ENCODE measurements at regions of chr7 and their contacts with region 1.

Region 1: DNA sequence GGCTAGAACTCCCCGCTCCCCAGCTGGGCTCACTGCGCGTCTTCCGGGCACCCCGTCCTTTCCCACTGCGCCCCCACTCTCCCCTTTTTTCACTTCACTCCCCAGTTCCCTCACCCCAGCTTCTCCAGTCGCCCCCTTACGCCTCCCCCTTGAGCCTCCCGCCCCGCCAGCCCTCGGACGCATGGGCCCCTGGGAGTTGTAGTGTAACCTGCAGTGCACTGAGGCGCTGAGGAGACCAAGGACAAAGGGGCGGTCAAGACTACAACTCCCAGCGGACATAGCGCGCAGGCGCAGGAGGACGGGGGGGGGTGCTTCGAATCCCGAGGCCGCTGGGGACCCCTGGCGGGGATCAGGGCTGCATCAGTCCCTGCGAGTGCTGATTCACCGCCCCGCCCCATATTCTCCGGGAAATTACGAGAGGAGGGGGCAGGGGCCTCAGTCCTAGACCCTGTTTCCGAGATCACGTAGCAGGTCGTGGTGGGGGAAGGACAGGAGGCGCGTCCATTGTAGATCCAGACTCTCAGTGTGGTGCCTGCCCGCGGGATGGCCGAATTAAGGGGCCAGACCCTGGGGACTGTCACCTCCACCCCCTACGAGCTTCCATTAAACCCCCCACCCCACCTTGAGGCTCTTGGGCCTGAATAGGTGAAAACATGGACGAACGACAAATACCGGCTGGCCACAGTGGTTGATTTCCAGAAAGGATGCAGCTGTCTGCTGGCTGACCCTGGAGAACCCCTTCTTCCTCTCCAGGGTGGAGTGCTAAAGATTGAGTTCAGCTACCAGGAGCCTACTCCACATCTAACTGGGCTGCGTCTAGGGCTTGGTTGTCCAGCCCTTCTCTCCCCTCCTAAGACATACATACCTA is 554 bp upstream of the YWHAG start:
- DNase-seq: peak; percentile 99
- H3K4me3 ChIP-seq: peak overlapping the region; percentile 91
- H3K4me3 Mint-ChIP-seq: peak overlapping the region; percentile 87
- H3K27ac Mint-ChIP-seq: peak overlapping the region; percentile 89
- H3K4me1 ChIP-seq: peaks cover 19% of the 10 kb centered on the region
- H3K4me1 Mint-ChIP-seq: peaks cover under 1% of the 10 kb centered on the region
- H3K27me3 ChIP-seq: no peaks in the 10 kb centered on the region
- H3K27me3 Mint-ChIP-seq: no peaks in the 10 kb centered on the region
- CTCF ChIP-seq: peak; percentile 84 to 87

Region 2: GRCh38 chr7:76047811-76048667 is 311.3 kb before region 1 on chr7 and contains the starts of genes MDH2 and STYXL1:
- CTCF ChIA-PET with region 1: no interaction called
- POLR2A ChIA-PET with region 1: no interaction called
- intact Hi-C with region 1: no loop called
- DNase-seq: peak; percentile 96 to 97
- H3K4me3 ChIP-seq: peak within 1 kb of the TSS; percentile 77
- H3K4me3 Mint-ChIP-seq: peak within 1 kb of the TSS; percentile 100
- H3K27ac Mint-ChIP-seq: peak within 1 kb of the TSS; percentile 99
- H3K4me1 ChIP-seq: peaks cover 13% of the 10 kb centered on the region
- H3K4me1 Mint-ChIP-seq: peaks cover 22% of the 10 kb centered on the region
- H3K27me3 ChIP-seq: no peaks in the 10 kb centered on the region
- H3K27me3 Mint-ChIP-seq: no peaks in the 10 kb centered on the region
- CTCF ChIP-seq: no peak
- total RNA-seq, gene MDH2: 302 and 313 TPM in 2 replicates
- total RNA-seq, gene STYXL1: 42.3 and 49.7 TPM in 2 replicates

Region 3: GRCh38 chr7:76291343-76292212 is 67.8 kb before region 1 on chr7:
- CTCF ChIA-PET with region 1: no interaction called
- POLR2A ChIA-PET with region 1: no interaction called
- intact Hi-C with region 1: loop called (anchors 5 kb)
- DNase-seq: peak; percentile 92 to 93
- H3K4me3 ChIP-seq: peak overlapping the region; percentile 18; the same call in 1 of the 2 replicates
- H3K4me3 Mint-ChIP-seq: peak overlapping the region; percentile 17
- H3K27ac Mint-ChIP-seq: peak overlapping the region; percentile 36
- H3K4me1 ChIP-seq: peaks cover 33% of the 10 kb centered on the region
- H3K4me1 Mint-ChIP-seq: peaks cover 22% of the 10 kb centered on the region
- H3K27me3 ChIP-seq: no peaks in the 10 kb centered on the region
- H3K27me3 Mint-ChIP-seq: no peaks in the 10 kb centered on the region
- CTCF ChIP-seq: peak; percentile 97 to 98

Region 4: DNA sequence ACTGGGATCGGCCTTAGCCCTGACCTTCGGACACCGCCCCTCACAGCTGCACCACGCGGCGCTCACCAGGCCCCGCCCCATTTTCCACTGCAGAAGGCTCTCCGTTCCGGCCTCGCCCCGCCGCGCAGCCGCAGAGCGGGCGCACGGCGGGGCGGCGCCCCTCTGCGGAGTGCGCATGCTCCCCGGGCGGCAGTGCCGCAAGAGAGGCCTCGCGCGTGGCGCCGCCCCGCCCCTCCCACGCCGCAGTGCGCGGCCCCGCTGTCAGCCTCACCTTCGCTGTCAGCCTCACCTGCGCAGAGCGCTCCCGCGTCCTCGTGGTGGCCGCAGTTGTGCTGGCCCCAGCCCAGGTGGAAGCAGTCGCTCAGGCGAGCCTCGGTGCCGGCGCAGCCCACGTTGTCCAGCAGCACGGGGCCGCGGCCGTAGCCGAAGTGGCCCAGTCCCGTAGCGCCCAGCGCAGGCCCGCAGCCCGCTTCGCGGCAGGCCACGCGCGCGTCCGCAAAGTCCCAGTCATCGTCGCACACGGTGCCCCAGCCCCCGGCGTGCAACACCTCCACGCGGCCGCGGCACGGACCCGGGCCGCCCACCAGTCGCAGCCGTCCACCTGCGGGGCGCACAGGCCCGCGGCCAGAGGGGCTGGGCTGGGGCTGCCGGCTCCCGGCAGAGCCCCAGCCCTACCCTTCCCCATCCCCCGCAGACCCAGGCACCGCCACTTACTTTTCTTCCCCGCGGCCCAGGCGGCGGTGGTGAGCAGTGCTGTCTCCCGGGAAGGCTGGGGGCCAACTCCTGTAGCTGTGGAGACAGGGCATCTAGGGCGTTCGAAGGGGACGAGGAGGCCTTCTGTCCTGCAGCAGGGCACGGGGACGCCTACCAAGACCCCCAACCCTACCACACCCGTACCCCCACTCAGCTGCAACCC is 34.0 kb after region 1 on chr7:
- CTCF ChIA-PET with region 1: no interaction called
- POLR2A ChIA-PET with region 1: interaction called, 5 read pairs
- intact Hi-C with region 1: loop called (anchors 1 kb)
- DNase-seq: peak; percentile 96 to 97
- H3K4me3 ChIP-seq: peak overlapping the region; percentile 55
- H3K4me3 Mint-ChIP-seq: peak overlapping the region; percentile 78
- H3K27ac Mint-ChIP-seq: peak overlapping the region; percentile 90
- H3K4me1 ChIP-seq: peaks cover 23% of the 10 kb centered on the region
- H3K4me1 Mint-ChIP-seq: peaks cover 7% of the 10 kb centered on the region
- H3K27me3 ChIP-seq: no peaks in the 10 kb centered on the region
- H3K27me3 Mint-ChIP-seq: no peaks in the 10 kb centered on the region
- CTCF ChIP-seq: no peak

Measured in Caco-2 (cell line).